SK-N-SH (cell line): ENCODE measurements at regions of chr1 and their contacts with region 1.

Region 1: DNA sequence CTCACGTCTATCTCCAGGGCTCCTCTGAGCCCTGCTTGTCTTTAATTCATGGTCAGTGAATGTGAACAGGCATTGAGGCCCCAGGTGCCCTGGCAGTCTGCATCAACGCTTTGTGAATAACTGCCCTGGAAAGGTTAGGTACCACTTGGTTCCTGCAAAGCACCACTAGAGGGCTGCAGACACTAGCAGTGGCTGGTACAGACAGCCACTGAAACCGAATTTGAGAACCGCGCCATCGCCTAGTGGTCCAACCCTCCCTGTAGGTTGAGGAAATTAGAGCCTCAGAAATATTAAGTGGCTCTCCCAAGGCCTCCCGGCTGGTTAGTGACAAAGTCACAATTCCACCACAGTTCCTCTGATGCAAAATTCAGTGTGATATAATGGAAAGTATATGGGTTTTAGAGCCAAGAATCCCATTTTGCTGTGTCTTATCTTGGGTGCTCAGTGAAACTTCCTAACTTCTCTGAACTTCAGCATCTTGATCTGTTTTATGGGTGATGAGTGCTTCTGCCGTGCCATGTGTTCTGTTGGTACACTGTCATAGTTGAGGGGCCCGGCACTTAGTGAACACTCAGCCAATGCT is 46.2 kb upstream of the BCL9 start:
- DNase-seq: peak; percentile 65
- H3K4me3 ChIP-seq: no peak overlapping the region; a peak in 1 of 4 replicates
- H3K27ac ChIP-seq: no peak overlapping the region
- H3K4me1 ChIP-seq: no peaks in the 10 kb centered on the region; a peak in 1 of 4 replicates
- H3K27me3 ChIP-seq: no peaks in the 10 kb centered on the region; the same call in 1 of the 2 replicates
- CTCF ChIP-seq: peak; percentile 96
- EP300 ChIP-seq: no peak
- RAD21 ChIP-seq: peak; percentile 99

Region 2: DNA sequence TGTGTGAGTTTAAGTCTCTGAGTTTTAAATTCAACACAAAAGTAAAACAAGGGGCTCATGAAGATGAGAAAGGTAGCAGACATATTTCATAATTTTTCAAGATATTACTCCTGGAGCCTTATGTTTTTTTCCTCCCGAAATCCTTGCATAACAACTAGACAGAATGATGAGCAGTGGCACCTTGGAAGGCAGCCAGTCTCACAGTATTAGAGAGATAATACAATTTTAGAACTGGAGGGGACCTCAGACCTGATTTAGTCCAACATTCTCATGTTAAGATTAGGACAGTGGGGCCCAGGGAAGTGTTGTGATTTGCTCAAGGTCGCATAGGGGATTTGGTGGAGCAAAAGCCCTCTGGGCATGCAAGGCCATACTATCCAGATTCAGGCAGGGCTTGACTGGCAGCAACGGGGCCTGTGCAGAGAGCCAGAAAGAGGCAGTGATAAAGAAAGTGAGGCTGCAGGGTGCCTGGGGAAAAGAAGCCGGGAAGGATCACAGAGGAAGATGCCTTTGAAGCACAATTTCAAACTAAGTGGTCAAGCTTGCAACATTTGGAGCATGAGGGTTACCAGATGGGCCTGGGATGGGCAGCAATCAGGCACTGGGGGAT is 14.8 kb after region 1 on chr1:
- CTCF ChIA-PET with region 1: interaction called, 15 read pairs
- POLR2A ChIA-PET with region 1: no interaction called
- DNase-seq: peak; percentile 33
- H3K4me3 ChIP-seq: no peak overlapping the region
- H3K27ac ChIP-seq: peak overlapping the region in 1 of 2 experiments; percentile 45; a peak in 2 of 4 replicates
- H3K4me1 ChIP-seq: peaks cover 0 to 13% of the 10 kb centered on the region in 2 experiments; a peak in 2 of 4 replicates
- H3K27me3 ChIP-seq: no peaks in the 10 kb centered on the region
- CTCF ChIP-seq: no peak
- EP300 ChIP-seq: no peak
- RAD21 ChIP-seq: no peak

Region 3: DNA sequence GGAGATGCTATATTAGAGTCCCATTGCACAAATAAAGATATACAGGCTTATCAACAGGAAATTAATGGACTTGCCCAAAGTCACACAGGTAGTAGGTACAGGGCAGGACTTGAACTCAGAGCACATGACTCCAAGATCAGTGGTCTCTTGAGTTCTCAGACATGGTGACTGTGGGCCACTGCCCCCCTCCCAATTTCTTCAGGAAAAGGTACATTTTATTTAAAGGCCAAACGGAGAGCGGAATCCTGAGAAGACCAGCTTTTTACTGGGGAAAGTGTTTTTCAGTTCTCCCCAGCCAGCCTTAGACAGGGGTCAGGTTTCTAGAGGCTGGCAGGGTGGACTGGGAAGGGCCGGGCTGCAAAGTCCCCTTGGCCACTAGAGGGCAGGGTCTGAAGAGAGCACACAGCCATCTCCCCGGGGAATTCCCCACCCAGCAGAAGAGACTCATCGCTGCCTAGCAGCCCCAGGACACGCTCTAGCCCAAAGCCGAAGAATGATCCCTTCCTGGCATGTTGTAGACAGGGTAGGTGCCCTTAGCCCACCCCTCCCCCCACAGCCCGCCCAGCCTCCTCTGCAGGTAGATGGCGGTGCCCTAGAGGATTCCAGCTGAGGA is 145.6 kb after region 1 on chr1:
- CTCF ChIA-PET with region 1: interaction called, 26 read pairs
- POLR2A ChIA-PET with region 1: no interaction called
- DNase-seq: peak; percentile 68
- H3K4me3 ChIP-seq: no peak overlapping the region
- H3K27ac ChIP-seq: no peak overlapping the region
- H3K4me1 ChIP-seq: no peaks in the 10 kb centered on the region; a peak in 1 of 4 replicates
- H3K27me3 ChIP-seq: no peaks in the 10 kb centered on the region
- CTCF ChIP-seq: peak; percentile 77
- EP300 ChIP-seq: no peak
- RAD21 ChIP-seq: peak; percentile 41

Region 4: GRCh38 chr1:147757015-147758000 is 262.2 kb after region 1 on chr1:
- CTCF ChIA-PET with region 1: no interaction called
- POLR2A ChIA-PET with region 1: no interaction called
- DNase-seq: no peak
- H3K4me3 ChIP-seq: no peak overlapping the region
- H3K27ac ChIP-seq: no peak overlapping the region
- H3K4me1 ChIP-seq: peaks cover 0 to 6% of the 10 kb centered on the region in 2 experiments; a peak in 1 of 4 replicates
- H3K27me3 ChIP-seq: peaks cover 10% of the 10 kb centered on the region; the same call in 1 of the 2 replicates
- CTCF ChIP-seq: no peak
- EP300 ChIP-seq: no peak
- RAD21 ChIP-seq: no peak